CD4-positive, alpha-beta memory T cell (primary cell): ENCODE measurements at regions of chr15 and their contacts with region 1.

Region 1: GRCh38 chr15:93087825-93088199 is 1.2 kb downstream of the RGMA start:
- DNase-seq: peak; percentile 64 to 75 (median 68)
- H3K4me3 ChIP-seq: peak overlapping the region in 1 of 2 donors; percentile 35
- H3K4me3 Mint-ChIP-seq: peak overlapping the region; percentile 78 to 89 (median 82)
- H3K27ac ChIP-seq: no peak overlapping the region
- H3K27ac Mint-ChIP-seq: peak overlapping the region in 1 of 7 donors; percentile 55
- H3K4me1 ChIP-seq: peaks cover 17% of the 10 kb centered on the region
- H3K4me1 Mint-ChIP-seq: peaks cover 6 to 16% (median 11%) of the 10 kb centered on the region in 4 donors
- H3K27me3 ChIP-seq: peaks cover 28% of the 10 kb centered on the region
- H3K27me3 Mint-ChIP-seq: peaks cover 50 to 51% of the 10 kb centered on the region in 2 donors

Region 2: GRCh38 chr15:93001881-93002280 is 85.9 kb before region 1 on chr15:
- CTCF ChIA-PET with region 1: no interaction called
- POLR2A ChIA-PET with region 1: no interaction called
- intact Hi-C with region 1: no loop called
- DNase-seq: no peak
- H3K4me3 ChIP-seq: no peak overlapping the region
- H3K4me3 Mint-ChIP-seq: no peak overlapping the region
- H3K27ac ChIP-seq: no peak overlapping the region
- H3K27ac Mint-ChIP-seq: peak overlapping the region in 6 of 7 donors; percentile 10 to 89 (median 54)
- H3K4me1 ChIP-seq: no peaks in the 10 kb centered on the region
- H3K4me1 Mint-ChIP-seq: peaks cover 0 to 4% (median 2%) of the 10 kb centered on the region in 4 donors
- H3K27me3 ChIP-seq: no peaks in the 10 kb centered on the region
- H3K27me3 Mint-ChIP-seq: no peaks in the 10 kb centered on the region

Region 3: GRCh38 chr15:93030430-93031105 is 57.2 kb before region 1 on chr15:
- CTCF ChIA-PET with region 1: interaction called, 12 read pairs
- POLR2A ChIA-PET with region 1: no interaction called
- intact Hi-C with region 1: no loop called
- DNase-seq: peak in 4 of 5 donors; percentile 57 to 71 (median 63)
- H3K4me3 ChIP-seq: no peak overlapping the region
- H3K4me3 Mint-ChIP-seq: peak overlapping the region in 1 of 8 donors; percentile 27
- H3K27ac ChIP-seq: no peak overlapping the region
- H3K27ac Mint-ChIP-seq: peak overlapping the region; percentile 17 to 85 (median 66)
- H3K4me1 ChIP-seq: peaks cover 22% of the 10 kb centered on the region
- H3K4me1 Mint-ChIP-seq: peaks cover 14 to 29% (median 19%) of the 10 kb centered on the region in 4 donors
- H3K27me3 ChIP-seq: no peaks in the 10 kb centered on the region
- H3K27me3 Mint-ChIP-seq: no peaks in the 10 kb centered on the region

Region 4: GRCh38 chr15:93035953-93036800 is 51.6 kb before region 1 on chr15:
- CTCF ChIA-PET with region 1: interaction called, 12 read pairs
- POLR2A ChIA-PET with region 1: no interaction called
- intact Hi-C with region 1: no loop called
- DNase-seq: peak in 4 of 5 donors; percentile 19 to 43 (median 36)
- H3K4me3 ChIP-seq: no peak overlapping the region
- H3K4me3 Mint-ChIP-seq: peak overlapping the region in 6 of 8 donors; percentile 42 to 84 (median 78)
- H3K27ac ChIP-seq: no peak overlapping the region
- H3K27ac Mint-ChIP-seq: peak overlapping the region in 5 of 7 donors; percentile 51 to 92 (median 80)
- H3K4me1 ChIP-seq: peaks cover 8% of the 10 kb centered on the region
- H3K4me1 Mint-ChIP-seq: peaks cover 5 to 13% (median 6%) of the 10 kb centered on the region in 4 donors
- H3K27me3 ChIP-seq: no peaks in the 10 kb centered on the region
- H3K27me3 Mint-ChIP-seq: no peaks in the 10 kb centered on the region

Region 5: DNA sequence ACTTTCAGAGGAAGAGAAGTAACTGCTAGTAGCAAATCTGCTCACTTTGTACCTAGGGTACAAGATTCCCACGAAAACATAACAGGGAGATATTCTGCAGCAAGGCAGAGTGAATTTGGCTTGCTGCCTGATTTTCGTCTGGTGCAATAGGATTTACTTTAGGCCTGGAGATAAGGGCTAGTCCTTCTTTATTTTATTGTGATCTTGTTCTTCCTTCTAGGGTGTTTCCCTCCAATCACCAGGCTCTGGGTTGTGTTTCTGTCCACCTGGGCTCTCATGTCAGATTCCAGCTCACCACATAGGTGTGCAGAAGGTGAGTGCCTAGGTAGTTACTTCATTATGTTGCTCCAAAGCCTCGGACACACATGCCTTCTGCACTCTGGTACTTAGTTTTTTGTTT is 213.0 kb after region 1 on chr15:
- CTCF ChIA-PET with region 1: interaction called, 5 read pairs
- POLR2A ChIA-PET with region 1: no interaction called
- intact Hi-C with region 1: loop called (anchors 1 kb)
- DNase-seq: no peak
- H3K4me3 ChIP-seq: no peak overlapping the region
- H3K4me3 Mint-ChIP-seq: no peak overlapping the region
- H3K27ac ChIP-seq: no peak overlapping the region
- H3K27ac Mint-ChIP-seq: no peak overlapping the region
- H3K4me1 ChIP-seq: no peaks in the 10 kb centered on the region
- H3K4me1 Mint-ChIP-seq: no peaks in the 10 kb centered on the region
- H3K27me3 ChIP-seq: no peaks in the 10 kb centered on the region
- H3K27me3 Mint-ChIP-seq: peaks cover 0 to 4% of the 10 kb centered on the region in 2 donors

Region 6: DNA sequence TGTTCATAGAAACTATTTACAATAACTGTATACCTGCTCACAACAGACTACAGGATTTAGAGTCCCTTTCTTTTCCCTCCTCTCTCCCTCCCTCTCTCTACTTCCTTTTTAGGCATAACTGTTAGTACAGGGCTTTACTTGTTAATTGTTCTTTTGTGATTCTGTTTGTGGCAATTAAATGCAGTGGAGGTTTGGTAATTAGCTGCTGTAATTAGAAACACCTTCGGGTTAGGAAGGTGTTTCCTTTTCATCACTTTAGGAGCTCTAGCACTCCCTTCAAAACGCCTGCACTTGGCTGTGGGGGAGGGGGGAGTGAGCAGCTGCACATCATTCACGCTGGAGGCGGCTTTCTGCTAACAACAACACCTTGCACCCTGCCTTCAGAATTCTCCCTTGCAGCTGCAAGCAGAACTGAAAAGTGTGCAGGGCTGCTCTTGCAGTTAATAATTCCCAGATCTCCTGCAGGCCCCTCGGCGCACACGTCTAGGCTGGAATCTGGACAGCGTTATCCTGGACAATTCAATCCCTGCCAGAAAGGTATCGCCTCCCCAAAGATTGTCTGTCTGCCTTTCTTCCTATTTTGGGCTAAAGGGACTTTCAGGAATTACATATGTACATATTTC is 243.8 kb after region 1 on chr15:
- CTCF ChIA-PET with region 1: interaction called, 5 read pairs
- POLR2A ChIA-PET with region 1: no interaction called
- intact Hi-C with region 1: loop called (anchors 10 kb)
- DNase-seq: no peak
- H3K4me3 ChIP-seq: no peak overlapping the region
- H3K4me3 Mint-ChIP-seq: no peak overlapping the region
- H3K27ac ChIP-seq: no peak overlapping the region
- H3K27ac Mint-ChIP-seq: no peak overlapping the region
- H3K4me1 ChIP-seq: no peaks in the 10 kb centered on the region
- H3K4me1 Mint-ChIP-seq: peaks cover 0 to 1% (median 0%) of the 10 kb centered on the region in 4 donors
- H3K27me3 ChIP-seq: no peaks in the 10 kb centered on the region
- H3K27me3 Mint-ChIP-seq: peaks cover 25 to 36% of the 10 kb centered on the region in 2 donors

Region 7: GRCh38 chr15:94119923-94120775 is 1032.3 kb after region 1 on chr15:
- CTCF ChIA-PET with region 1: interaction called, 22 read pairs
- POLR2A ChIA-PET with region 1: interaction called, 4 read pairs
- intact Hi-C with region 1: no loop called
- DNase-seq: peak; percentile 55 to 61 (median 58)
- H3K4me3 ChIP-seq: no peak overlapping the region
- H3K4me3 Mint-ChIP-seq: no peak overlapping the region
- H3K27ac ChIP-seq: no peak overlapping the region
- H3K27ac Mint-ChIP-seq: no peak overlapping the region
- H3K4me1 ChIP-seq: no peaks in the 10 kb centered on the region
- H3K4me1 Mint-ChIP-seq: no peaks in the 10 kb centered on the region
- H3K27me3 ChIP-seq: no peaks in the 10 kb centered on the region
- H3K27me3 Mint-ChIP-seq: peaks cover 0 to 1% of the 10 kb centered on the region in 2 donors

Region 8: DNA sequence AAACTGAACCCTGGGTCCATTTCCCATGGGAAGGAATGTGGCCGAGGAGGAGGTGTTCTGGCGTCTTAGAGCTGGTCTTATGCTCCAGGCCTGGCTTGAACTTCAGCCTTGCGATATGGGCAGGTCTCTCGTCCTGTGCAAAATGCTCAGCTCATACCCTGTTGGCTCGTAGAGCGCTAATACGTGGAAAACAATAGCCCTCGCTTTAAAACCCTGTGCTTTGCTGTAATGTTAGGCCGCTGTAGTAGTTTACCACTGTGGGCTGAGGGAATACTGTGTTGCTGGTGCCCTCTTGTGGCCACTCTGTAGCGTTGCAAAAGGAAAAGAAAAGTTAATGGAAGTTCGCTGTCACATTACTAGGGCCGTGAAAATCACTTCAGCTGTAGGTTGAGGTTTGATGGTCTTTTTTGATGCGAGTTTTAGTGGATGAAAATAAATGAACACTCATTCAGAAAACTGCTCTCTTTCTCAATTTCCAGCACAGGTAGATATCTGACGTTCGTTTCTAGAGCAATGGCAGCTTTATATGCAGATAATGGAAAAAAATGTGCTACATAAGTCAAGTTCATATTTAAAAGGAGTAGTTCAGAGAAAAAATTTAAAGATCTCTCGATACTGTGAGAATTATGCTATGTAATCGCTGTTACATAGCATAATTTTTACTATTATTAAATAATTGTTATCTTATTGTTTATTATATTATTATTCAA is 1236.5 kb after region 1 on chr15:
- CTCF ChIA-PET with region 1: interaction called, 6 read pairs
- POLR2A ChIA-PET with region 1: interaction called, 3 read pairs
- intact Hi-C with region 1: loop called (anchors 5 kb)
- DNase-seq: peak; percentile 38 to 55 (median 45)
- H3K4me3 ChIP-seq: no peak overlapping the region
- H3K4me3 Mint-ChIP-seq: no peak overlapping the region
- H3K27ac ChIP-seq: no peak overlapping the region
- H3K27ac Mint-ChIP-seq: peak overlapping the region in 4 of 7 donors; percentile 52 to 74 (median 57)
- H3K4me1 ChIP-seq: no peaks in the 10 kb centered on the region
- H3K4me1 Mint-ChIP-seq: peaks cover 5 to 9% (median 6%) of the 10 kb centered on the region in 4 donors
- H3K27me3 ChIP-seq: no peaks in the 10 kb centered on the region
- H3K27me3 Mint-ChIP-seq: no peaks in the 10 kb centered on the region